GM12878 (cell line): ENCODE measurements at regions of chr9 and their contacts with region 1.

Region 1: GRCh38 chr9:124381170-124381945 is 33.9 kb downstream of the PSMB7 start:
- DNase-seq: no peak
- ATAC-seq: no peak
- H3K4me3 ChIP-seq: no peak overlapping the region
- H3K27ac ChIP-seq: no peak overlapping the region
- H3K4me1 ChIP-seq: no peaks in the 10 kb centered on the region
- H3K27me3 ChIP-seq: no peaks in the 10 kb centered on the region
- CTCF ChIP-seq: no peak
- EP300 ChIP-seq: no peak
- POLR2A ChIP-seq: no peak
- RAD21 ChIP-seq: no peak

Region 2: GRCh38 chr9:124149992-124150391 is 231.4 kb before region 1 on chr9:
- CTCF ChIA-PET with region 1: no interaction called
- POLR2A ChIA-PET with region 1: no interaction called
- RAD21 ChIA-PET with region 1: no interaction called
- SMC1A ChIA-PET with region 1: no interaction called
- in situ Hi-C with region 1: no loop called
- intact Hi-C with region 1: no loop called
- DNase-seq: no peak
- ATAC-seq: no peak
- H3K4me3 ChIP-seq: no peak overlapping the region
- H3K27ac ChIP-seq: no peak overlapping the region
- H3K4me1 ChIP-seq: no peaks in the 10 kb centered on the region; the same call in 1 of the 2 replicates
- H3K27me3 ChIP-seq: no peaks in the 10 kb centered on the region
- CTCF ChIP-seq: no peak
- EP300 ChIP-seq: no peak
- POLR2A ChIP-seq: no peak
- RAD21 ChIP-seq: no peak

Region 3: GRCh38 chr9:124392871-124393460 is 11.6 kb after region 1 on chr9:
- CTCF ChIA-PET with region 1: interaction called, 17 read pairs
- POLR2A ChIA-PET with region 1: interaction called, 4 read pairs
- RAD21 ChIA-PET with region 1: interaction called, 3 read pairs
- SMC1A ChIA-PET with region 1: interaction called, 11 read pairs
- in situ Hi-C with region 1: no loop called
- intact Hi-C with region 1: no loop called
- DNase-seq: no peak
- ATAC-seq: no peak
- H3K4me3 ChIP-seq: no peak overlapping the region
- H3K27ac ChIP-seq: no peak overlapping the region
- H3K4me1 ChIP-seq: peaks cover 5% of the 10 kb centered on the region; the same call in 1 of the 2 replicates
- H3K27me3 ChIP-seq: no peaks in the 10 kb centered on the region
- CTCF ChIP-seq: no peak
- EP300 ChIP-seq: no peak
- POLR2A ChIP-seq: no peak
- RAD21 ChIP-seq: no peak

Region 4: DNA sequence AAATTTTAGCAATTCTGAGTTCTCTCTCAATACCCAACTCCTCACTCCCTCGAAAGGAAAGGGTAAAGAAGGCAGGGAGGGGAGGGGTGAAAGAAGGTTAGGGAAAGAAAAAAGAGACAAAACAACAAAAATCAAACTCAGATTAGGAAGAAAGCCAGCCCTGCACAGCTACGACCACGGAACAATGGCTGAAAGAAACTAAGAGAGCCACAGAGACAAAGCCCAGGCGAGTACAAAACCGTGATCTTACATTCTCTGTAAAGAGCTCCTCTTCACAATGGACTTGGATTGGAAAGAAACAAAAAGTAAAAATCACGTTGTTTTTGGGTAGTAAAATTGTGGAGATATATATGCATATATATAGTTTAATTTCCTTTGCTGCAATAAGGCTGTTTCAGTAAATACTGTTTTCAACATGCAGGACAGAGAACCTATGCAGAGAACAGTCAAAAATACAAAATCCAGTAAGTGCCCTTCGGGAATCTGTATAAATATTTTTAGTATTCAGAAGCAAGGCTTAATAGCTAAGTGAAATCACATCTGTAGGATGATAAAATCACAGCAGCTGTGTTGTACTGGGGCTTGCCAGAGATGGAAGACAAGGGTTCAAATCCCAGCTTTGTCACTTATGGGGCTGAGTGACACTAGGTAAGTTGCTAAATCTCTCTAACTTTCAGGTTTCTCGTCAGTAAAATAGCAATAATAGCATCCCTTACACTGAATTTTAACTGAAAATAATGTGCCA is 17.0 kb after region 1 on chr9:
- CTCF ChIA-PET with region 1: interaction called, 5 read pairs
- POLR2A ChIA-PET with region 1: interaction called, 4 read pairs
- RAD21 ChIA-PET with region 1: interaction called, 3 read pairs
- SMC1A ChIA-PET with region 1: interaction called, 11 read pairs
- in situ Hi-C with region 1: no loop called
- intact Hi-C with region 1: no loop called
- DNase-seq: no peak
- ATAC-seq: no peak
- H3K4me3 ChIP-seq: no peak overlapping the region
- H3K27ac ChIP-seq: no peak overlapping the region
- H3K4me1 ChIP-seq: peaks cover 5% of the 10 kb centered on the region; the same call in 1 of the 2 replicates
- H3K27me3 ChIP-seq: no peaks in the 10 kb centered on the region
- CTCF ChIP-seq: no peak
- EP300 ChIP-seq: no peak
- POLR2A ChIP-seq: no peak
- RAD21 ChIP-seq: no peak

Region 5: DNA sequence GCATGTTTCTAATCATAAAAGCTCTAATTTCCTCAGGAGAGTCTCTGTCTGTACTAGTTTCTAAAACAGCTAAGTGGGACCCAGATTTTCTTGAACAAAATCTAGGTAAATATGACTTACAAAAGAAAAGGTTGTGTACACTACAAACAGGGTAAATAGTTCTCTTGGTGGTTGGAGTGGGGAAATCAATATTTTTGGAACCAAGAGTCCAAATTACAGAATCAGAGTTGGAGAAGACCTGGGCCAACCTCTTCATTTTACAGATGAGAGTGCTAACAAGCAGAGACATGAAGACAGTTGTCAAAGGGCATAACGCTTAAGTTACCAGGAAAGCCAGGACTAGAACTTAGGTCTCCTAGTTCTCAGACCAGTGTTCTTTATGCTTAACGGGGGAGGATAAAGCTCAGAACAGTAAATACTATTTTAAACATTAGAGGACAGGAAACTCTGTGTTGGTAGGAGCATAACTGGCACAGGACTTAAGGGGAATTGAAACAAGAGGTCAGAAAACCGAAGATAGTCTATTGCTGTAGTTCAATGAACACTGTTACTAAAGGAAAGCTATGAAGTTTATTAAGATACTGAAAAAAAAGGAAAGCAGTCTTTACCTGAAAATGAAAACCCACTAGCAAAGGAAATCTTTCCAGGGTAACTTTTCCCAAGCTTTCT is 568.8 kb after region 1 on chr9:
- CTCF ChIA-PET with region 1: no interaction called
- POLR2A ChIA-PET with region 1: no interaction called
- RAD21 ChIA-PET with region 1: no interaction called
- SMC1A ChIA-PET with region 1: no interaction called
- in situ Hi-C with region 1: no loop called
- intact Hi-C with region 1: no loop called
- DNase-seq: no peak
- ATAC-seq: peak; percentile 54; the same call in 2 of the 3 replicates
- H3K4me3 ChIP-seq: no peak overlapping the region
- H3K27ac ChIP-seq: no peak overlapping the region; the same call in 1 of the 2 replicates
- H3K4me1 ChIP-seq: peaks cover 4% of the 10 kb centered on the region; the same call in 1 of the 2 replicates
- H3K27me3 ChIP-seq: no peaks in the 10 kb centered on the region
- CTCF ChIP-seq: no peak
- EP300 ChIP-seq: no peak
- POLR2A ChIP-seq: no peak
- RAD21 ChIP-seq: no peak